GM13977 (cell line): ENCODE measurements at regions of chr16 and their contacts with region 1.

Region 1: GRCh38 chr16:30112197-30113030 is 923 bp downstream of the GDPD3 start:
- DNase-seq: peak; percentile 76
- CTCF ChIP-seq: peak; percentile 82

Region 2: GRCh38 chr16:29653471-29653870 is 458.9 kb before region 1 on chr16:
- in situ Hi-C with region 1: no loop called
- DNase-seq: no peak
- CTCF ChIP-seq: no peak

Region 3: GRCh38 chr16:30407102-30407803 is 294.8 kb after region 1 on chr16 and contains the start of gene ZNF771:
- in situ Hi-C with region 1: loop called (anchors 25 kb)
- DNase-seq: peak; percentile 96
- CTCF ChIP-seq: no peak

Region 4: DNA sequence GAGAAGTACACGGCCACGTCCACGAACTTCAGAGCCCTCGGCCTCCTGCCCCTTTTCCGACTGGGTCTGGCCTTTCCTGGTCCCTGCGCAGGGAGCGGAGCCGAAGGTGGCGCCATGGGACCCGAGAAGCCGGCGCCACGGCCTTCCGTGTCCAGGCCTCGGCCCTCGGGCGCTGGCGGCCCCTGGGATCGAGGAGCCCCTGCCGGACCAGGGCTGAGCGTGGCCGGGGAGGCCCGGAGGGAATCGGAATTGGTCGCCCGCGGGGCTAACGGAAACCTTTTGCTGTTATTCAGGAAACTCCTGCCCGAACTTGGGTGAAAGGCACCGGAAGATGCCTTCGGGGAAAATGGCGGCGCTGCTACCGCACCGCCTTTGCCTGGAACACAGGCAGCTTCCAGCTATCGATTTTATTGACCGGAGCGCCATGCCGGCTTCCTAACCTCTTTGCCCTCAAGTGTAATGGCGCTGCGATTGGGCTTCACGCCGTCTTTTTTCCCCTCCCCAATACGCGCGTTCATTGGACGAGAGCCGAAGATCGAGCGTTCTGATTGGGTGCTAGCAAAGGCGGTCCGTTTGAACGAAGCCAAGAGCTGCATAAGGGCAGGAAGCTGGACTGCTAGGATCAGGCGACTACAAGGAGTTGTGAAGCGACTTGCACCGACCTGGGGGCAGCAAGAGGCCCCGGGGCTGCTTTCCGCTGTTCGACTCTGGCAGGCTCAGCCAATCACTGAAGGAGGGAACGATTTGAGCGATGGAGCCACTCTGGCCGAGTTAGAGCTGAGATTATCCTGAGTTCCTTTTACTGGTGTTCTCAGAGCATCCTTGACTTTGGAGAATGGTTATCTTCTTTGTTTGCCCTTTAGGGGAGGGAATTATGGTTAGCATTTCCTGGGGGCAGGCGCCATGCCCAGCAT is 497.8 kb after region 1 on chr16 and contains the start of gene ZNF689:
- in situ Hi-C with region 1: loop called (anchors 25 kb)
- DNase-seq: peak; percentile 98
- CTCF ChIP-seq: no peak